HCT116 (cell line): ENCODE measurements at regions of chr3 and their contacts with region 1.

Region 1: DNA sequence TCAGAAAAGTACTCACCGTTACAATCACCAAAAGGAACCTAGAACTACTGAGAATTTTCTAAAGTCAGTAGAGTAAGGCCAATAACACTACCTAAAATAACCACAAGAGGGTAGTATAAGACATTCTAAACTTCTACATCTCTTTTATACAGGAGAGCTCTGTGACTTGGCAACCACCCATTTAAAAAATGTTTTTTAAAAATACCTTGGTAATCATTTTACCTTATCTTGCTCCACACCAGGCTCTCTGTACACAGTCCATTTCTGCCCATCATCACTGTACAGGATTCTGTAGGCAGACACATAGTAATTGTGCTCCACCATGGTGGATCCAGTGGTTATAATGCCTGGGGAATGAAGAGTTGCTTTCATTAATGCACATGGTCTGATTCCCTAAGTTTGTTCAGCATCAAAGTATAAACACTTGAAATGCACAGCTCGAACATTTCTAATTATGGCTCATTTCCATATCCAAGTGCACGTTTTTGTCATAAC is 54.5 kb downstream of the ST3GAL6 start:
- DNase-seq: no peak
- ATAC-seq: peak; percentile 80
- H3K4me3 ChIP-seq: no peak overlapping the region
- H3K27ac ChIP-seq: no peak overlapping the region
- H3K4me1 ChIP-seq: peaks cover 0 to 12% of the 10 kb centered on the region in 2 experiments; a peak in 2 of 4 replicates
- H3K27me3 ChIP-seq: no peaks in the 10 kb centered on the region
- CTCF ChIP-seq: peak; percentile 54 to 87 (median 59); a peak in 5 of 6 replicates
- POLR2A ChIP-seq: no peak
- RAD21 ChIP-seq: peak; percentile 79

Region 2: DNA sequence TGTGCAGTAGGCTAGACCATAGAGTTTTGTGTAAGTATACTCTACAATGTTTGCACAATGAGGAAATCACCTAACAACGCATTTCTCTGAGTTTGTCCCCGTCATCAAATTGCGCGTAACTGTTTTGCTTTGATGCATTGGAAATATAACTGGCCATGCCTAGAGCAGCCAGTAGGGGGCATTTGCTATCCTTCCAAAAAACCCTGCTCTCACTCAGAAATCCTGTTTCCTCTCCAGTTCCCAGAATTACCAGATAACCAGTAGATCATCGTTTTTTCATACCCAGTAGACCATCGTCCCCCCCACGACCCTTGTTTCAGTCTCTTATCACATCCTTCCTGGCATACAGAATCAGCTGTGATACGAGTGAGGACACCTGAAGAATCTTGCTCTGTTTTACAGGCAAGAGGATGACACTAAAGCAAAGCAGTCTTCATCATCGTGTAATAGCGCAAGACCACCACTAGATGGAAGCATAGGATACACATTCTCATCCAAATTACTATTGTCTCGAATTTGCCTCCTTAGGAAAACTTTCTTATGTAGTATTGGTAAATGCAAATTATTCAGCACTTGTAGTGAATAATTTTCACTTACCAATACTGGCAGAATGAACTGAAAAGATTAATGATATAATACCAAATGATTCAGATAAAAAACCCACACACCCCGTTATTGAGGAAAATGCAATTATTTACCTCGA is 778.1 kb before region 1 on chr3:
- CTCF ChIA-PET with region 1: interaction called, 3 read pairs
- POLR2A ChIA-PET with region 1: no interaction called
- RAD21 ChIA-PET with region 1: no interaction called
- intact Hi-C with region 1: loop called (anchors 5 kb)
- DNase-seq: peak; percentile 89
- ATAC-seq: peak; percentile 91
- H3K4me3 ChIP-seq: peak overlapping the region; percentile 26 to 49
- H3K27ac ChIP-seq: no peak overlapping the region
- H3K4me1 ChIP-seq: peaks cover 0 to 8% of the 10 kb centered on the region in 2 experiments; a peak in 2 of 4 replicates
- H3K27me3 ChIP-seq: no peaks in the 10 kb centered on the region
- CTCF ChIP-seq: peak; percentile 77 to 97 (median 92)
- POLR2A ChIP-seq: no peak
- RAD21 ChIP-seq: peak; percentile 81

Region 3: GRCh38 chr3:98588065-98588464 is 229.5 kb before region 1 on chr3:
- CTCF ChIA-PET with region 1: interaction called, 13 read pairs
- POLR2A ChIA-PET with region 1: interaction called, 5 read pairs
- RAD21 ChIA-PET with region 1: no interaction called
- intact Hi-C with region 1: no loop called
- DNase-seq: no peak
- ATAC-seq: no peak
- H3K4me3 ChIP-seq: no peak overlapping the region
- H3K27ac ChIP-seq: peak overlapping the region; percentile 93; the same call in 1 of the 2 replicates
- H3K4me1 ChIP-seq: peaks cover 75 to 91% of the 10 kb centered on the region in 2 experiments
- H3K27me3 ChIP-seq: no peaks in the 10 kb centered on the region
- CTCF ChIP-seq: peak; percentile 37 to 70 (median 64); a peak in 5 of 6 replicates
- POLR2A ChIP-seq: no peak
- RAD21 ChIP-seq: peak; percentile 64

Region 4: GRCh38 chr3:98602078-98602678 is 215.4 kb before region 1 on chr3:
- CTCF ChIA-PET with region 1: interaction called, 130 read pairs
- POLR2A ChIA-PET with region 1: interaction called, 3 read pairs
- RAD21 ChIA-PET with region 1: interaction called, 4 to 10 read pairs
- intact Hi-C with region 1: loop called (anchors 1 kb)
- DNase-seq: peak; percentile 71
- ATAC-seq: peak; percentile 96
- H3K4me3 ChIP-seq: no peak overlapping the region
- H3K27ac ChIP-seq: no peak overlapping the region
- H3K4me1 ChIP-seq: no peaks in the 10 kb centered on the region
- H3K27me3 ChIP-seq: no peaks in the 10 kb centered on the region
- CTCF ChIP-seq: peak; percentile 82 to 96 (median 94)
- POLR2A ChIP-seq: no peak
- RAD21 ChIP-seq: peak; percentile 97

Region 5: DNA sequence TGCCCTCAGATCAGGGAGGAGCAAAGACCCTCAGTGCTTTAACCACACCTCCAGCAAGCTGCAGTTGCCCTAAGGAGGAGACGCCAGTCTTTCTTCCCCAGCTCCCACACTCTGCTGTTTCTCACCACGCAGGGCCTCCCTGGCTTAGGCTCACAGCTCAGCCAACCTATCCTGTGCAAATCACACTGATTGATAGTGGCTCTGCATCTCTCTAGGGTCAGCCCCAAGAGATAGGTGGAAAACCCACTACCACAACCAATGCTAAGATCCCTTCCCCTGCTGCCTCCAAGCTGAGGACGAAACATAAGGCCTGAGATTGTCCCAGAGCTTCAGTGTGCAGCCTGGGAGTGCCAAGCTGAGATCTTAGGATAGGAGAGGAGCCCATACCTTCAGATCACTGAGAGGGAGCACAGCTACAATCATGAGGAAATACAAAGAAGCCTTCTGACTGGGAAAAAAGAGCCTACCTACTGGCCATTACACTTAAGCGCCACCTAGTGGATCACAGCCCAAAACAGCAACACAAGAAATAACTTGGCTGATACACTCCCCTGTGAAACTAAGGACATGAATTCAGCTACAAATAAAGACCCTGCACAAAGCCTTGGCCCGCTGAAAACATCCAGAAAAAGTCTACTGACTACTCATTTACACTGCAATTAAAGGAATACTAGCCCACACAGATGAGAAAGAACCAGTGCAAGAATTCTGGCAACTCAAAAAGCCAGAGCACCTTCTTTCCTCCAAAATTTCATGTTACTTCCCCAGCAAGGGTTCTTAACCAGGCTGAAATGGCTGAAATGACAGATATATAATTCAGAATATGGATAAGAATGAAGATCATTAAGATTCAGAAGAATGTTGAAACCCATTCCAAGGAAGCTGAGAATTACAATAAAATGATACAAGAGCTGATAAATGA is 355.4 kb after region 1 on chr3:
- CTCF ChIA-PET with region 1: no interaction called
- POLR2A ChIA-PET with region 1: no interaction called
- RAD21 ChIA-PET with region 1: no interaction called
- intact Hi-C with region 1: loop called (anchors 10 kb)
- DNase-seq: peak; percentile 56
- ATAC-seq: peak; percentile 93
- H3K4me3 ChIP-seq: no peak overlapping the region
- H3K27ac ChIP-seq: no peak overlapping the region
- H3K4me1 ChIP-seq: no peaks in the 10 kb centered on the region
- H3K27me3 ChIP-seq: no peaks in the 10 kb centered on the region
- CTCF ChIP-seq: peak; percentile 72 to 91 (median 88); a peak in 5 of 6 replicates
- POLR2A ChIP-seq: no peak
- RAD21 ChIP-seq: peak; percentile 82